ENCODE measurements at regions of chr17 and their contacts with region 1.

Region 1: GRCh38 chr17:81484195-81484979 is 28.2 kb downstream of the ACTG1 start:
- DNase-seq: peak; percentile 78 to 90
- H3K4me3 ChIP-seq: peak overlapping the region; percentile 34 to 68 (median 46)
- H3K27ac ChIP-seq: no peak overlapping the region
- H3K4me1 ChIP-seq: peaks cover 0 to 4% of the 10 kb centered on the region in 2 donors
- H3K27me3 ChIP-seq: no peaks in the 10 kb centered on the region
- CTCF ChIP-seq: peak; percentile 80 to 99 (median 82)
- POLR2A ChIP-seq: no peak

Region 2: DNA sequence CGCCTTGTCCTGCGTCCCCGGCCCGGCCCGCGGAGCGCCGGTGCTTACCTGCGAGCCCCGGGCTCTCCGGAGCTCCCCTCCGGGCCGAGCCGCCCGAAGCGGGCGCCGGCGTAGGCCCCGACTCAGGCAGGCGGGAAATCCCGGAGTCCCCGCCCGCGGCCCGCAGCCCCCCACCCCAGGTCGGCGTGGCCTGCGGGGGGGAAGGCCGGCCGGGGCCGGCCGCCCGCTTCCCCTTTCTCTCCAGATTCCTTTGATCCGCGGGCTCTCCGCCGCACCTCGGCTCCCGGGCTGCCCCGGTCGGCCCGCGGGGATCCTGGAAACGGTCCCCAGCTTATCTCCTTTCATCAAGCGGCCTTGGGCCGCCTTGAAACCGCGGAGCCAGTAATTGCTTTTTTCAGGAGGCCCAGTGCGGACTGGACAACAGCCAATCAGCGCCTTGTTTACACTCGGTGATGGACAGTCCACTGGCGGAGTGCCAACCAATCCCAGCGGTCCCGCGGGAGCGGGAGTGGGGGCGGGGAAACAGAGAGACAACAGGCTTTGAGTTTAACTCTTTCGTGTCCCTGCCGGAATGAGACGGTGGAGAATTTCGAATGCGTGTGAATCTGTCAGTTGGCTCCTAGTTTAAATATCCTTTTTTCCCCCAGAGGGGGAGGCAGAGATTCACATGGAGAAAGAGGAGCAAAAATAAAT is 90.6 kb before region 1 on chr17:
- intact Hi-C with region 1: loop called (anchors 2 kb)
- DNase-seq: peak; percentile 100
- H3K4me3 ChIP-seq: peak overlapping the region; percentile 60 to 90 (median 82)
- H3K27ac ChIP-seq: peak overlapping the region; percentile 96
- H3K4me1 ChIP-seq: peaks cover 7% of the 10 kb centered on the region in 2 donors
- H3K27me3 ChIP-seq: no peaks in the 10 kb centered on the region
- CTCF ChIP-seq: peak in 2 of 3 donors; percentile 4 to 11
- POLR2A ChIP-seq: peak; percentile 76